ENCODE measurements at regions of chr3 and their contacts with region 1.

Region 1: GRCh38 chr3:110165744-110166143 is 828.4 kb upstream of the DPPA4 start:
- DNase-seq: no peak
- ATAC-seq: no peak
- H3K4me3 ChIP-seq: no peak overlapping the region
- H3K27ac ChIP-seq: peak overlapping the region; percentile 68
- H3K4me1 ChIP-seq: peaks cover 2% of the 10 kb centered on the region; the same call in 1 of the 2 replicates
- H3K27me3 ChIP-seq: no peaks in the 10 kb centered on the region
- CTCF ChIP-seq: no peak
- POLR2A ChIP-seq: no peak
- RAD21 ChIP-seq: no peak

Region 2: DNA sequence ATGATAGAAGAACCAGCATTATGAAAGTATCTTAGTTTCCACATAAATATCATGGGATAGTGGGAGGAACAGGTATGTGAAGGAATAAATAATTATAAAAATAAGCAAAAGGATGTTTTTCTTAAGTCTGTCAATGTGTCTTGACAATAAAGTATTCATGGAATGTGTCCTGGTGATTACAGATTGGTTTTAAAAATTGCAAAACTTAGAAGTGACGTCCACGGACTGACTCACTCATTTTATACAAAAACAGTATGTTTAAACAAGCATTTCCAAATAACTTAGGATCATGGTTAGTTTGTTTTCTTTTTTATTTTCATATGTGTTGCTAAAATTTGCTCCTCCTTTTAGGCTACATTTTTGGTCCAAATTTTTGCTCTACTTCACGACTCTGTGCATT is 218.9 kb after region 1 on chr3:
- CTCF ChIA-PET with region 1: no interaction called
- POLR2A ChIA-PET with region 1: no interaction called
- dilution Hi-C with region 1: no loop called
- in situ Hi-C with region 1: no loop called
- intact Hi-C with region 1: loop called (anchors 10 kb)
- DNase-seq: peak; percentile 84
- ATAC-seq: peak; percentile 69
- H3K4me3 ChIP-seq: no peak overlapping the region
- H3K27ac ChIP-seq: peak overlapping the region; percentile 94
- H3K4me1 ChIP-seq: peaks cover 5% of the 10 kb centered on the region; the same call in 1 of the 2 replicates
- H3K27me3 ChIP-seq: no peaks in the 10 kb centered on the region
- CTCF ChIP-seq: no peak
- POLR2A ChIP-seq: no peak
- RAD21 ChIP-seq: no peak

Region 3: DNA sequence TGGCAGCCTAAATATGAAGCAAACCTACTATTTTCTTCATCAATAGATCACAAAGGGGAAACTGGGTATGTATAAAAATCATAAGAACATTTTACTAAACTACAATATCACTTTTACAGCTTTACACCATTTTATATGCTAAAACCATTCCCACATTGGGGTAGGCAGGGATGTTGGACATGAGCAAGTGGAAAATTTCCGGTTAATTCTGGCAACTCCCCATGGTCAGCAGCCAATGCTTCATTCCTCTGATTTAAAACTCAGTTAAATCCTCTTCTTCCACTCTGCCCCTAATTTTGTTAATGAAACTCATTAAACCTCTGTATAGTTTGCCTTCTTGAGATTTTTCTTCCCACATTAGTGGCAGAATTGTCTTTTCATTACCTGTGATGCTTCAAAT is 353.3 kb after region 1 on chr3:
- CTCF ChIA-PET with region 1: no interaction called
- POLR2A ChIA-PET with region 1: no interaction called
- dilution Hi-C with region 1: no loop called
- in situ Hi-C with region 1: no loop called
- intact Hi-C with region 1: no loop called
- DNase-seq: no peak
- ATAC-seq: no peak
- H3K4me3 ChIP-seq: no peak overlapping the region
- H3K27ac ChIP-seq: no peak overlapping the region
- H3K4me1 ChIP-seq: peaks cover 2% of the 10 kb centered on the region; the same call in 1 of the 2 replicates
- H3K27me3 ChIP-seq: no peaks in the 10 kb centered on the region
- CTCF ChIP-seq: no peak
- POLR2A ChIP-seq: no peak
- RAD21 ChIP-seq: no peak

Measured in IMR-90 (cell line).